WTC11 (cell line): ENCODE measurements at regions of chr11 and their contacts with region 1.

Region 1: DNA sequence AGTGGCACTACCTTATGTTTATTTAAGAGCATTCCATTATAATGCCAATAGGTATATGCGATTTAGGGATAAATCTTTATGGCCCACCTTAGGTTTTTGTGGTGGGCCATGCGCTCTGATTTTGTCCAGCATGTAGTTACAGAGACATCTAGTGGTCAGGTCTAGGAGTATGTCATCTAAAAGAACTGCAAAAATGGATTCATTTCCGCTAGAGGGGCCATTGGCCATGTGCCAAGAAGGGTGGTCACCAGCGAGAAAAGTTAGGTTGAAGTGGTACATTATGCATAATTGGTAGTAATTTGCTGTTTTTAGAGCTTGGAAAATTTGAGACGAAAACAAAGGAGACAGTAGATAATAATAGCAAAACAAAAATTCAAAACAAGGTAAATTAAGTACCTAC is 27.7 kb downstream of the LRRC4C start:
- DNase-seq: peak; percentile 15
- ATAC-seq: peak; percentile 84
- H3K4me3 Mint-ChIP-seq: no peak overlapping the region
- H3K27ac Mint-ChIP-seq: no peak overlapping the region
- H3K4me1 Mint-ChIP-seq: peaks cover 31% of the 10 kb centered on the region
- H3K27me3 Mint-ChIP-seq: no peaks in the 10 kb centered on the region
- CTCF ChIP-seq: peak; percentile 42

Region 2: GRCh38 chr11:42524534-42525227 is 1092.9 kb after region 1 on chr11:
- CTCF ChIA-PET with region 1: interaction called, 11 read pairs
- POLR2A ChIA-PET with region 1: no interaction called
- DNase-seq: peak; percentile 59
- ATAC-seq: peak; percentile 90
- H3K4me3 Mint-ChIP-seq: no peak overlapping the region
- H3K27ac Mint-ChIP-seq: no peak overlapping the region
- H3K4me1 Mint-ChIP-seq: peaks cover 27% of the 10 kb centered on the region
- H3K27me3 Mint-ChIP-seq: no peaks in the 10 kb centered on the region
- CTCF ChIP-seq: peak; percentile 81